B cell (primary cell): ENCODE measurements at regions of chr15 and their contacts with region 1.

Region 1: GRCh38 chr15:65818927-65819562 is 27.0 kb upstream of the DENND4A start:
- DNase-seq: peak; percentile 91
- ATAC-seq: peak; percentile 78
- H3K4me3 ChIP-seq: peak overlapping the region in 2 of 5 experiments; percentile 21 to 40
- H3K4me3 Mint-ChIP-seq: peak overlapping the region; percentile 70
- H3K27ac ChIP-seq: peak overlapping the region; percentile 91 to 94
- H3K27ac Mint-ChIP-seq: peak overlapping the region; percentile 96
- H3K4me1 ChIP-seq: peaks cover 66 to 77% of the 10 kb centered on the region in 2 donors
- H3K4me1 Mint-ChIP-seq: peaks cover 74% of the 10 kb centered on the region
- H3K27me3 ChIP-seq: no peaks in the 10 kb centered on the region
- H3K27me3 Mint-ChIP-seq: no peaks in the 10 kb centered on the region
- CTCF ChIP-seq: no peak

Region 2: GRCh38 chr15:65610871-65611718 is 207.9 kb before region 1 on chr15 and contains the start of gene INTS14:
- CTCF ChIA-PET with region 1: no interaction called
- POLR2A ChIA-PET with region 1: no interaction called
- intact Hi-C with region 1: loop called (anchors 1 kb)
- DNase-seq: peak; percentile 93
- ATAC-seq: peak; percentile 97
- H3K4me3 ChIP-seq: peak within 1 kb of the TSS; percentile 61 to 90 (median 85)
- H3K4me3 Mint-ChIP-seq: peak within 1 kb of the TSS; percentile 99
- H3K27ac ChIP-seq: peak within 1 kb of the TSS; percentile 78 to 95
- H3K27ac Mint-ChIP-seq: peak within 1 kb of the TSS; percentile 98
- H3K4me1 ChIP-seq: peaks cover 17 to 21% of the 10 kb centered on the region in 2 donors
- H3K4me1 Mint-ChIP-seq: peaks cover 38% of the 10 kb centered on the region
- H3K27me3 ChIP-seq: no peaks in the 10 kb centered on the region
- H3K27me3 Mint-ChIP-seq: no peaks in the 10 kb centered on the region
- CTCF ChIP-seq: peak; percentile 59
- total RNA-seq, gene INTS14: 37.8 and 39.0 TPM in 2 replicates

Region 3: DNA sequence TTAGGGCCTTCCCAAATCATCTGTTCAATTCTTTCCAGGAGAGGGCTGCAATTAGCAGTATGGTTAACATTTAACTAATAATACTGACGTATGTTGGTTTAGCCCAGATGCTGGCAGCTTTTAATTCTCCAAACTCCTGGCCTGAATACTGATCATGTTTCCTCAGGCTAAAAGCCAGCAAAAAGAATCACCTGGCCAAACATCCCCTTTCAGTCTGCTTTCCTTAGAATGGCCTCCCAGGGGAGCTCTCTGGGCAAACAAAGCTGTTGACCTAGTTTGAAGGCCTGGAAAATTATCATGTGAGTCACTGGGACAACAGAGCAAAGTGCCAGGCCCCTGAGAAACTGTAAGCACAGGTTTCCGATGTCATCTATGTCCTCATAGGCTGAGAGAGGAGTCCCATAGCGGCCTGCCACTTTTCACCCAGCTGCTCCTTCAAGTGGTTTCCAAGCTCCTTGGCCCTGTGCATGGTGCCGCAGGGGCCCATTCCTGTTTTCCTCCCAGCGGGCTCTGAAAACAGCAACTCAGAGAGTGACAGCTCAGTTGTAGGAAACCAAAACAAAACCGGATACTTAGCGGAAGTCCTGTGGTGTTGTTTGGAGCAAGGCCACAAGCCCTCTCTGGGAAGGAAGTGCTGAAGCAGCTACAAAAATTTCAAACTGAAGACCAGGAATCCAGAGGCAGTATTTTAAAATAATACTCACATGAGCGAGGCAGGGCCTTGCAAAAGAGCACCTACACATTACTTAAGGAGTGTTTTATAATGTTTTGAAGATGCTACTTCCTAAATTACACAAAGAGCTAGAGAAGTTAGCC is 13.7 kb after region 1 on chr15:
- CTCF ChIA-PET with region 1: interaction called, 12 read pairs
- POLR2A ChIA-PET with region 1: interaction called, 3 read pairs
- intact Hi-C with region 1: loop called (anchors 1 kb)
- DNase-seq: peak; percentile 68
- ATAC-seq: peak; percentile 60
- H3K4me3 ChIP-seq: peak overlapping the region in 3 of 5 experiments; percentile 21 to 52 (median 25)
- H3K4me3 Mint-ChIP-seq: peak overlapping the region; percentile 80
- H3K27ac ChIP-seq: peak overlapping the region; percentile 70 to 79
- H3K27ac Mint-ChIP-seq: peak overlapping the region; percentile 96
- H3K4me1 ChIP-seq: peaks cover 37 to 40% of the 10 kb centered on the region in 2 donors
- H3K4me1 Mint-ChIP-seq: peaks cover 56% of the 10 kb centered on the region
- H3K27me3 ChIP-seq: no peaks in the 10 kb centered on the region
- H3K27me3 Mint-ChIP-seq: no peaks in the 10 kb centered on the region
- CTCF ChIP-seq: no peak

Region 4: GRCh38 chr15:65903296-65904073 is 84.4 kb after region 1 on chr15:
- CTCF ChIA-PET with region 1: no interaction called
- POLR2A ChIA-PET with region 1: no interaction called
- intact Hi-C with region 1: no loop called
- DNase-seq: no peak
- ATAC-seq: no peak
- H3K4me3 ChIP-seq: no peak overlapping the region
- H3K4me3 Mint-ChIP-seq: peak overlapping the region; percentile 9
- H3K27ac ChIP-seq: peak overlapping the region; percentile 4 to 32
- H3K27ac Mint-ChIP-seq: peak overlapping the region; percentile 68
- H3K4me1 ChIP-seq: peaks cover 22 to 37% of the 10 kb centered on the region in 2 donors
- H3K4me1 Mint-ChIP-seq: peaks cover 38% of the 10 kb centered on the region
- H3K27me3 ChIP-seq: no peaks in the 10 kb centered on the region
- H3K27me3 Mint-ChIP-seq: no peaks in the 10 kb centered on the region
- CTCF ChIP-seq: no peak